OCI-LY7 (cell line): ENCODE measurements at regions of chr12 and their contacts with region 1.

Region 1: GRCh38 chr12:96208801-96209549 is 14.8 kb downstream of the ELK3 start:
- DNase-seq: peak; percentile 92
- H3K4me3 ChIP-seq: peak overlapping the region; percentile 33
- H3K27ac ChIP-seq: no peak overlapping the region
- H3K4me1 ChIP-seq: peaks cover 68% of the 10 kb centered on the region
- CTCF ChIP-seq: peak; percentile 49

Region 2: GRCh38 chr12:96194971-96195844 is 13.8 kb before region 1 on chr12:
- CTCF ChIA-PET with region 1: no interaction called
- POLR2A ChIA-PET with region 1: interaction called, 11 read pairs
- intact Hi-C with region 1: loop called (anchors 1 kb)
- DNase-seq: peak; percentile 84
- H3K4me3 ChIP-seq: peak overlapping the region; percentile 70
- H3K27ac ChIP-seq: peak overlapping the region; percentile 46
- H3K4me1 ChIP-seq: peaks cover 70% of the 10 kb centered on the region
- CTCF ChIP-seq: no peak